Endothelial cell of umbilical vein (primary cell): ENCODE measurements at regions of chr15 and their contacts with region 1.

Region 1: GRCh38 chr15:100383302-100384107 is 41.7 kb upstream of the ADAMTS17 start:
- DNase-seq: no peak
- H3K4me3 ChIP-seq: no peak overlapping the region
- H3K27ac ChIP-seq: no peak overlapping the region
- H3K4me1 ChIP-seq: no peaks in the 10 kb centered on the region
- H3K27me3 ChIP-seq: no peaks in the 10 kb centered on the region
- CTCF ChIP-seq: no peak
- POLR2A ChIP-seq: no peak

Region 2: GRCh38 chr15:100264994-100265673 is 118.4 kb before region 1 on chr15:
- CTCF ChIA-PET with region 1: no interaction called
- POLR2A ChIA-PET with region 1: no interaction called
- dilution Hi-C with region 1: no loop called
- intact Hi-C with region 1: no loop called
- DNase-seq: no peak
- H3K4me3 ChIP-seq: no peak overlapping the region
- H3K27ac ChIP-seq: no peak overlapping the region
- H3K4me1 ChIP-seq: no peaks in the 10 kb centered on the region
- H3K27me3 ChIP-seq: no peaks in the 10 kb centered on the region
- CTCF ChIP-seq: no peak
- POLR2A ChIP-seq: no peak

Region 3: DNA sequence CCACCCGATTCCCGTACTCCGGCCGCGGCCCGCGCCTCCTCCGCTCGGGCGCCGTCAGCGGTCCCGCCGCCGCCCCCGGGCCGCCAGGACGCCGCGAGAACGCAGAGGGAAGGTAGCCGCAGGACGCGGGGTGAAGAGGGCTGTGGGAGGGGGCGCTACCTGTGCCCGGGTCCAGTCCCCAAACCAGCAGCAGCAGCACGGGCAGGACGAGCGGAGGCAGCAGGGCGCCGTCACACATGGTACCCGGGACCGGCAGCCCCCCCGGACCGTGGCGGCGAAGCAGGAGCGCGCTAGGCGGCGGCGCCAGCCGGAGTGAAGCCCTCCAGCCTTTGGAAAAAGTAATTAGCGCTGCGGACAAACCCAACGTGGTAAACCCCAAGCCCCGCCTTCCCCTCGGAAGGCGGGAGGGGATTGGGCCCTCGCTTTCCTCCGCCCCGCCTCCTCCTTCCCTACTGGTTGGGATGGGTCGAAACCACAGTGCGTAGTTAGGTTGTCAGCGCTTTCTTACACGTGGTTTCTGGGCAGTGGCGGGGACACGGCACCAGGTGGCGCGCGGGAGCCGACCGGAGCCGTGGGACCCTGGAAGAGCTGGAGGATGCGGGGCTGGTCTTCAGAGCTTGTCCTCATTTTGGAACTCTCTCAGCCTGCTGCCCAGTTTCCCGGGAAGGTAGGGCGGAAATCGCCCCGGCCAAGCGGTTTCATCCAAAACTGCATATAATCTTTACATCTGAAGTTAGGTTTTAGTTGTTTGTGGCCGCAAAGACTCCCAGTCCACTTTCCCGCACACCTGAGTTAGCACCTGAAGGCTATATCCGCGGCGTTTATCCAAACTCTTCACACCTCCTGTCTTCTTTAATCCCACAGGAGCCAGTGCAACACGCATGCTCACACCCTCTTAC is 41.6 kb before region 1 on chr15 and contains the start of gene ADAMTS17:
- CTCF ChIA-PET with region 1: no interaction called
- POLR2A ChIA-PET with region 1: no interaction called
- dilution Hi-C with region 1: no loop called
- intact Hi-C with region 1: no loop called
- DNase-seq: peak; percentile 92
- H3K4me3 ChIP-seq: peak within 1 kb of the TSS; percentile 16 to 36 (median 35)
- H3K27ac ChIP-seq: no peak within 1 kb of the TSS
- H3K4me1 ChIP-seq: peaks cover 4% of the 10 kb centered on the region
- H3K27me3 ChIP-seq: peaks cover 2 to 12% of the 10 kb centered on the region in 2 experiments
- CTCF ChIP-seq: peak; percentile 79 to 91
- POLR2A ChIP-seq: no peak
- total RNA-seq, gene ADAMTS17: not detected in 2 replicates

Region 4: GRCh38 chr15:100405179-100405578 is 21.7 kb after region 1 on chr15:
- CTCF ChIA-PET with region 1: no interaction called
- POLR2A ChIA-PET with region 1: no interaction called
- dilution Hi-C with region 1: no loop called
- intact Hi-C with region 1: no loop called
- DNase-seq: no peak
- H3K4me3 ChIP-seq: no peak overlapping the region
- H3K27ac ChIP-seq: no peak overlapping the region
- H3K4me1 ChIP-seq: no peaks in the 10 kb centered on the region
- H3K27me3 ChIP-seq: no peaks in the 10 kb centered on the region
- CTCF ChIP-seq: no peak
- POLR2A ChIP-seq: no peak

Region 5: DNA sequence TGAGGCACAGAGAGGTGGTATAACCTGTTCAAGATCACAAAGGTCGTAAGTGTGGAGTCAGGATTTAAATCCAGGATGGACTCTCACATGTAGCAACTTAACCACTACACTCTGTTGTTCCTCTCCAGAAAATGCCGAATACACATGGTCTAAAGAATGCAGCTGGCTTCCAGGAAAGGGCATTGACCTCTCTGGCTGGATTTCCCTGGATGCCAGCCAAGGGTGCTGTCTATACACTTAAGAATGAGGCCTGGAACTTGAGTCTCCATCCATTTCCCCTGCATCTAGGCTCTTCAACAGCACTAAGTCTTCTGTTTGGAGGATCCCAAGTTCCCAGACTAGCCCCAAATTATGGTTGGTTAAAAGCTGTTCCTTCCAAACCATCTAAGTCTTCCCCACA is 84.8 kb after region 1 on chr15:
- CTCF ChIA-PET with region 1: no interaction called
- POLR2A ChIA-PET with region 1: no interaction called
- dilution Hi-C with region 1: no loop called
- intact Hi-C with region 1: loop called (anchors 10 kb)
- DNase-seq: no peak
- H3K4me3 ChIP-seq: no peak overlapping the region
- H3K27ac ChIP-seq: no peak overlapping the region
- H3K4me1 ChIP-seq: no peaks in the 10 kb centered on the region
- H3K27me3 ChIP-seq: no peaks in the 10 kb centered on the region
- CTCF ChIP-seq: no peak
- POLR2A ChIP-seq: no peak

Region 6: DNA sequence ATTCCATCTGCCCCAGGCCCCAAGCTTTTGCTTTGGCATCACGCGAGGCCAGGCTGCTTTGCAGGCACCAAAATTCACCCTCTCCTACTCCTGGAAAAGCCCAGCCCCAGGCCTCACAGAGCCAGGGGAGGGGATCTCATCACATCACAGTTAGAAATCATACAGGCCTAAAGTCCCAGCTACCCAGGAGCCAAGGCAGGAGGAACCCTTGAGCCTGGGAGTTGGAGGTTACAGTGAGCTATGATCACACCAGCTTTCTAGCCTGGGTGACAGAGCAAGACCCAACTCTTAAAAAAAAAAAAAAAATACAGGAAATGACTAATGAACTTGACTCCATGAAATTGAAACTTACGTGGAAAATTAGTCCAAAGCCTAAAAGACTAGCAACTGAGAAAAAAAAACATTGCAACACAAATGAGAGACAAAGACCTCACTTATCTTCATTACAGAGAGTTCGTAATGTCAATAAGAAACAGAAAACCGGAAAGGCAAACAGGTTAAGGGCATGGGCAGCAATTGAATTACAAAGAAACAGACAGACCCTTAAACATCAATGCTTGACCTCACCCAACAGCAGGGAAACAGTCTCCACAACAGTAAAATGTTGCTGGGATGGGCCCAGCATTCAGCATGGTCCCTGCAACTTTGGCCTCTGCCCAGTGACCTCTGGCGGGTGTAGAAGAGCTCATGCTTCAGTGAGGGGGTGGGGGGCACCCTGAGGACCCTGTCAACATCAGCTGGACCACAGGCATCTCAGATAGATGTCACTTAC is 687.2 kb after region 1 on chr15:
- CTCF ChIA-PET with region 1: no interaction called
- POLR2A ChIA-PET with region 1: no interaction called
- dilution Hi-C with region 1: no loop called
- intact Hi-C with region 1: no loop called
- DNase-seq: peak; percentile 87
- H3K4me3 ChIP-seq: no peak overlapping the region
- H3K27ac ChIP-seq: peak overlapping the region; percentile 71
- H3K4me1 ChIP-seq: peaks cover 10% of the 10 kb centered on the region
- H3K27me3 ChIP-seq: no peaks in the 10 kb centered on the region
- CTCF ChIP-seq: no peak
- POLR2A ChIP-seq: no peak